ENCODE measurements at regions of chr9 and their contacts with region 1.

Region 1: GRCh38 chr9:101530077-101530711 is 3.5 kb upstream of the RNF20 start:
- DNase-seq: peak; percentile 63
- H3K4me3 ChIP-seq: no peak overlapping the region
- H3K27ac ChIP-seq: no peak overlapping the region
- H3K27me3 ChIP-seq: no peaks in the 10 kb centered on the region
- CTCF ChIP-seq: peak; percentile 89

Region 2: GRCh38 chr9:101465392-101465791 is 64.8 kb before region 1 on chr9:
- CTCF ChIA-PET with region 1: interaction called, 600 read pairs
- POLR2A ChIA-PET with region 1: interaction called, 4 read pairs
- DNase-seq: no peak
- H3K4me3 ChIP-seq: no peak overlapping the region
- H3K27ac ChIP-seq: no peak overlapping the region
- H3K27me3 ChIP-seq: no peaks in the 10 kb centered on the region
- CTCF ChIP-seq: peak; percentile 51

Region 3: DNA sequence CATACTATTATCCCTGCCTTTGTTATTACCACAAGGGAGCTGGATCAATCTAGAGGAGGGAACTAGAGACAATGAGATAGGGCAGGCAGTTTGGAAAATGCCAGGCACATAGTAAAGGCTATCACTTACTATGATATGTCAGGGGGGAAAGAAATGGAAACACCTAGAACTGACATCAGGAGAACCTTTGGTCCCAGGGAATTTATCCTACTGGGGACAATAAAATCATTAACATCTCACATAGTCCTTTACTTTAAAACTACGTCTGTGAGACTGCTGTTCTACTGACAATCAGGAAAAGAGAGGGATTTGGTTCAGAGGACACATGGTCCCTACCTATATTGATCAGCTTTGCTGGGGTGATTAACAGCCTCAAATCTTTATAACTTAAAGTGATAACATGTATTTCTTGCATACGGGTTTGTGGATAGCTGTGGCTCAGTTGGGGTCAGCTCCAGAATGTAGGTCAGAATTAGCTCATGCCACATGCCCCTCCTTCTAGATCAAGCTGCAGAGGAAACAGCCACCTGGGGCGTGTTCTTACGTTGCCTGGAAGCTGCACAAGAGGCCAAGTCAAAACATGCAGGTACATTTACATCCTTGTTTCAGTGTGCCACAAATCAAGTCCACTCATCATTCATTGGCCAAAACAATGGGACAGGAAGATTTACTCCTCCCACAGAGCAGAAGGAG is 50.7 kb before region 1 on chr9:
- CTCF ChIA-PET with region 1: interaction called, 17 read pairs
- POLR2A ChIA-PET with region 1: no interaction called
- DNase-seq: no peak
- H3K4me3 ChIP-seq: no peak overlapping the region
- H3K27ac ChIP-seq: no peak overlapping the region
- H3K27me3 ChIP-seq: no peaks in the 10 kb centered on the region
- CTCF ChIP-seq: no peak

Region 4: GRCh38 chr9:101514071-101514470 is 16.1 kb before region 1 on chr9:
- CTCF ChIA-PET with region 1: interaction called, 17 read pairs
- POLR2A ChIA-PET with region 1: no interaction called
- DNase-seq: no peak
- H3K4me3 ChIP-seq: no peak overlapping the region
- H3K27ac ChIP-seq: no peak overlapping the region
- H3K27me3 ChIP-seq: no peaks in the 10 kb centered on the region
- CTCF ChIP-seq: no peak

Measured in AG04450 (cell line).